HepG2 (cell line): ENCODE measurements at regions of chr10 and their contacts with region 1.

Region 1: DNA sequence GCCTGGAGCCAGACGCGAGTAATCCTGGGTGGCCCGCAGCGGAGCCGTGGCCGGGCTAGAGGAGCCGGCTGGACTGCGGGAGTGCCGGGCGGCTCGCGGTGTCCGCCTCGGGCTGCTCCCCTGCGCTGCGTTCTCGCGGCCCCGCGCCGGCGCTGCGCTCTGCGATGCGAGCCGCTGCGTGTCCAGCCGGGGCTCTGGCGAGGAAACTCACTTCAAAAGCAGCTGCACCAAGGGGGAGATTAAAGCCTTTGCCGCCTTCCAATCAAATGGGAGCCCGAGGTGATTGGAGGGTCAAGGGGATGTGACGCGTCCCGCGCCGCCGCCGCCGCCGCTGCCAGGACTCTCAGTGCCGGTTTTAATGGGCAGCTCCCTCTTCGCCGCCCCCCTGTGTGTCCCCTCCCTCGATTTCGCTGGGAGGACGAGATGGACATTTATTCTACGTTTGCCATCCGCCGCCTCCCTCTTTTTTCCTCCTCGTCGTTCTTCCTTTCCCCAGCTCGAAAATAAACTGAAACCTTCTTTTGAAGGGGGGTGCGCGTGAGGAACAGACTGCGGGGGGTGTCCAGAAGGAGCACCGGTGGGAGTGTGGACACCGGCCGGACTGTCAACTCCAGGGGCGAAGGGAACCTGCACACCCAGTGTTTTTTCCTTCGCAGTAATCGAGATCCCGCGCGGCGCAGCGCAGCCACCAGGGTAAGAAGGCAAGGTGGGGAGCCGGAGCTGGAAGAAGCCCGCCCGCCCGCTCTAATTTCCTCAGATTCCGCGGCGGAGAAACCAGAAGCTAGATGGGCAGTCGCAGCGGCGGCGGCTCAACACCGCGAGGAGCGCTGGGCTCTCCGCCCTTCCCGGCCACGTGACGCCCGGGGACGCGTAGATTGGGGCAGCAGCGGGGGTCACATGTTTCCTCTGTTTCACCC is at the start of gene ZNF503:
- DNase-seq: peak; percentile 98
- ATAC-seq: peak; percentile 65
- H3K4me3 ChIP-seq: peak within 1 kb of the TSS; percentile 100
- H3K27ac ChIP-seq: peak within 1 kb of the TSS; percentile 97
- H3K4me1 ChIP-seq: peaks cover 25% of the 10 kb centered on the region
- H3K27me3 ChIP-seq: no peaks in the 10 kb centered on the region; a peak in 1 of 5 replicates
- CTCF ChIP-seq: no peak; the same call in 1 of the 2 replicates
- EP300 ChIP-seq: peak in 1 of 2 experiments; percentile 43; a peak in 1 of 4 replicates
- POLR2A ChIP-seq: peak in 1 of 2 experiments; percentile 98; a peak in 2 of 4 replicates
- RAD21 ChIP-seq: peak; percentile 71
- total RNA-seq, gene ZNF503: 5.8 and 8.3 TPM in 2 replicates

Region 2: GRCh38 chr10:74194545-74194944 is 1207.3 kb before region 1 on chr10:
- CTCF ChIA-PET with region 1: no interaction called
- POLR2A ChIA-PET with region 1: no interaction called
- in situ Hi-C with region 1: no loop called
- intact Hi-C with region 1: no loop called
- DNase-seq: no peak
- ATAC-seq: no peak
- H3K4me3 ChIP-seq: no peak overlapping the region
- H3K27ac ChIP-seq: no peak overlapping the region
- H3K4me1 ChIP-seq: peaks cover 34% of the 10 kb centered on the region
- H3K27me3 ChIP-seq: no peaks in the 10 kb centered on the region
- CTCF ChIP-seq: no peak
- EP300 ChIP-seq: no peak
- POLR2A ChIP-seq: no peak
- RAD21 ChIP-seq: no peak

Region 3: GRCh38 chr10:75424571-75424970 is 22.7 kb after region 1 on chr10:
- CTCF ChIA-PET with region 1: no interaction called
- POLR2A ChIA-PET with region 1: interaction called, 219 read pairs
- in situ Hi-C with region 1: no loop called
- intact Hi-C with region 1: loop called (anchors 1 kb)
- DNase-seq: no peak
- ATAC-seq: no peak
- H3K4me3 ChIP-seq: no peak overlapping the region
- H3K27ac ChIP-seq: no peak overlapping the region
- H3K4me1 ChIP-seq: peaks cover 36% of the 10 kb centered on the region
- H3K27me3 ChIP-seq: no peaks in the 10 kb centered on the region
- CTCF ChIP-seq: no peak
- EP300 ChIP-seq: no peak
- POLR2A ChIP-seq: no peak
- RAD21 ChIP-seq: no peak

Region 4: DNA sequence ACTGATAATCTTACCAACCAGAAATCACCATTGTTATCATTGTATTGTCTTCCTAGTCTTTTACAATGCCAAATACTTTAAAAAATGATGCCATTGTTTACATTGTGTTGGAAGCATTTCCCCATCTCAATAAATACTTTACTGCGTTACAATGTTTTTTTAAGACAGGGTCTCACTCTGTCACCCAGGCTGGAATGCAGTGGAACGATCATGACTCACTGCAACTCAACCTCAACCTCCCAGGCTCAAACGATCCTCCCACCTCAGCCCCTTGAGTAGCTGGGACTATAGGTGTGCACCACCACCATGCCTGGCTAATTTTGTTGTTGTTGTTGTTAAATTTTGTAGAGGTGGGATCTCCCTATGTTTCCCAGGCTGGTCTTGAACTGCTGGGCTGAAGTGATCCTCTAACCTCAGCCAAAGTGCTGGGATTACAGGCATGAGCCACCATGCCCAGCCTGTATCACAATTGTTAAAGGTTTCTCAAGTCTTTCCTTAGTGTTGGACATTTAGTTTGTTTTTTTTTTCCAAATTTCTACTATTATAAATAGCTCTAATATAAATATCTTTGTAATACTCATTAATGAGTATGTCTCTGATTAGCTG is 43.1 kb after region 1 on chr10:
- CTCF ChIA-PET with region 1: no interaction called
- POLR2A ChIA-PET with region 1: no interaction called
- in situ Hi-C with region 1: no loop called
- intact Hi-C with region 1: no loop called
- DNase-seq: no peak
- ATAC-seq: no peak
- H3K4me3 ChIP-seq: no peak overlapping the region
- H3K27ac ChIP-seq: no peak overlapping the region
- H3K4me1 ChIP-seq: peaks cover 37% of the 10 kb centered on the region
- H3K27me3 ChIP-seq: no peaks in the 10 kb centered on the region
- CTCF ChIP-seq: no peak
- EP300 ChIP-seq: no peak
- POLR2A ChIP-seq: no peak
- RAD21 ChIP-seq: no peak

Region 5: DNA sequence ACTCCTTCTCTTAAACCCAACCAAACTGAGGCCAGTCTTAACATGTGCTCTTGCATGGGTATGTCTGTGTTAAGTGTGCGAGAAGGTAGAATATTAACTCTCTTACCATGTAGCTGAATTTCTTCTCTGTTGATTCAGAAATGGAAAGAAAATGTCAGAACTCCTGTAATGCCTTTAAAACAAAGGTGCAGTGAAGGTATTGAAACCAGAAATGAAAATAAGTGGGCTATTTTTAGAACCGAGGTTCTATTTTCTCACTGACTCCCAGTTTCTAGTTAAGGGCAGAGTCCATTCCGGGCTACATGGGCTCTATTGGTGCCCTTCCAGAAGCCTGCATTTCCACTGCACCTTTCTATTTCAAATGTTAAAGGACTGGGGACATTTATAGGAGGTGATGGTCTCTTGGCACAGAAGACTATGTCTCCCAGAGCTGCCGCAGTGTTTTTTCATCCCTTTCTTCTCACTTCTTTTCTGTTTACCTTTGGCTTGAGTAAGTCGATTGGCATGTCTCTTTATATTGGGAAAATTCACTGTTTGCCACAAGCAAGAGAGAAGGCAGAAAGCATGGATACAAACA is 204.5 kb after region 1 on chr10:
- CTCF ChIA-PET with region 1: no interaction called
- POLR2A ChIA-PET with region 1: no interaction called
- in situ Hi-C with region 1: no loop called
- intact Hi-C with region 1: loop called (anchors 10 kb)
- DNase-seq: peak; percentile 77
- ATAC-seq: peak; percentile 84
- H3K4me3 ChIP-seq: peak overlapping the region in 1 of 3 experiments; percentile 1; a peak in 1 of 6 replicates
- H3K27ac ChIP-seq: peak overlapping the region; percentile 58
- H3K4me1 ChIP-seq: peaks cover 52% of the 10 kb centered on the region
- H3K27me3 ChIP-seq: no peaks in the 10 kb centered on the region
- CTCF ChIP-seq: no peak
- EP300 ChIP-seq: no peak
- POLR2A ChIP-seq: no peak
- RAD21 ChIP-seq: no peak

Region 6: GRCh38 chr10:75682649-75683557 is 281.1 kb after region 1 on chr10:
- CTCF ChIA-PET with region 1: no interaction called
- POLR2A ChIA-PET with region 1: no interaction called
- in situ Hi-C with region 1: no loop called
- intact Hi-C with region 1: no loop called
- DNase-seq: no peak
- ATAC-seq: no peak
- H3K4me3 ChIP-seq: no peak overlapping the region
- H3K27ac ChIP-seq: no peak overlapping the region
- H3K4me1 ChIP-seq: peaks cover 8% of the 10 kb centered on the region; the same call in 1 of the 2 replicates
- H3K27me3 ChIP-seq: no peaks in the 10 kb centered on the region
- CTCF ChIP-seq: no peak
- EP300 ChIP-seq: no peak
- POLR2A ChIP-seq: no peak
- RAD21 ChIP-seq: no peak

Region 7: DNA sequence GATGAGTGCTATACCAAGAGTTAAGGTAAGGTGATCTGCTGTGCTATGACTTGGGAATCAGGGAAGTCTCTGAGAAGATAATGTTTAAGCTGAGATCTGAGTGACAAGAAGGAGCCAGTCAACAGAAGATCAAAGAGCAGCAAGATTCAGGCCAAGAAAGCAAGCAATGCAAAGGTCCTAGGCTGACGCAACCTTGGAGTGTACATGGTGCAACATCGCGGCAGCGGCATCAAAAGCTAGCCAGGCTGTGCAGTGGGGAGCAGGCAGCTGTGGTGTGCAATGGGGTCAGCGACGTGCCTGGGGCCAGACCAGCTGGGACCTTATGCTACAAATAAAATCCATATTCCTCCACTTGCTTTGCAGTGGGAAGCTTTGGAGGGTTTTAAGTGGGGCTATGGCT is 353.7 kb after region 1 on chr10:
- CTCF ChIA-PET with region 1: no interaction called
- POLR2A ChIA-PET with region 1: interaction called, 13 read pairs
- in situ Hi-C with region 1: no loop called
- intact Hi-C with region 1: no loop called
- DNase-seq: peak; percentile 69
- ATAC-seq: peak; percentile 99
- H3K4me3 ChIP-seq: no peak overlapping the region
- H3K27ac ChIP-seq: peak overlapping the region; percentile 61
- H3K4me1 ChIP-seq: peaks cover 43% of the 10 kb centered on the region
- H3K27me3 ChIP-seq: no peaks in the 10 kb centered on the region
- CTCF ChIP-seq: no peak
- EP300 ChIP-seq: peak in 1 of 2 experiments; percentile 95; a peak in 2 of 4 replicates
- POLR2A ChIP-seq: 0 out of 4 replicates have a peak, but pooled peaks of 1 of the 2 experiments have one; percentile 42
- RAD21 ChIP-seq: no peak

Region 8: GRCh38 chr10:75910032-75910431 is 508.2 kb after region 1 on chr10:
- CTCF ChIA-PET with region 1: interaction called, 3 read pairs
- POLR2A ChIA-PET with region 1: no interaction called
- in situ Hi-C with region 1: no loop called
- intact Hi-C with region 1: loop called (anchors 2 kb)
- DNase-seq: peak; percentile 26
- ATAC-seq: no peak
- H3K4me3 ChIP-seq: no peak overlapping the region
- H3K27ac ChIP-seq: no peak overlapping the region
- H3K4me1 ChIP-seq: no peaks in the 10 kb centered on the region
- H3K27me3 ChIP-seq: no peaks in the 10 kb centered on the region
- CTCF ChIP-seq: peak; percentile 28; the same call in 1 of the 2 replicates
- EP300 ChIP-seq: no peak
- POLR2A ChIP-seq: no peak
- RAD21 ChIP-seq: no peak

Region 9: GRCh38 chr10:76086761-76087639 is 685.2 kb after region 1 on chr10:
- CTCF ChIA-PET with region 1: interaction called, 4 read pairs
- POLR2A ChIA-PET with region 1: interaction called, 5 read pairs
- in situ Hi-C with region 1: no loop called
- intact Hi-C with region 1: loop called (anchors 2 kb)
- DNase-seq: peak; percentile 60
- ATAC-seq: peak; percentile 99
- H3K4me3 ChIP-seq: no peak overlapping the region
- H3K27ac ChIP-seq: no peak overlapping the region
- H3K4me1 ChIP-seq: peaks cover 52% of the 10 kb centered on the region
- H3K27me3 ChIP-seq: no peaks in the 10 kb centered on the region
- CTCF ChIP-seq: peak; percentile 90
- EP300 ChIP-seq: no peak
- POLR2A ChIP-seq: no peak
- RAD21 ChIP-seq: peak; percentile 92

Region 10: GRCh38 chr10:76618171-76618570 is 1216.3 kb after region 1 on chr10:
- CTCF ChIA-PET with region 1: no interaction called
- POLR2A ChIA-PET with region 1: no interaction called
- in situ Hi-C with region 1: no loop called
- intact Hi-C with region 1: no loop called
- DNase-seq: no peak
- ATAC-seq: no peak
- H3K4me3 ChIP-seq: no peak overlapping the region
- H3K27ac ChIP-seq: no peak overlapping the region
- H3K4me1 ChIP-seq: no peaks in the 10 kb centered on the region
- H3K27me3 ChIP-seq: no peaks in the 10 kb centered on the region
- CTCF ChIP-seq: no peak
- EP300 ChIP-seq: no peak
- POLR2A ChIP-seq: no peak
- RAD21 ChIP-seq: no peak